ENCODE measurements at regions of chr15 and their contacts with region 1.

Region 1: GRCh38 chr15:62306851-62307504 is 141.9 kb upstream of the C2CD4B start:
- DNase-seq: peak; percentile 16
- H3K4me3 ChIP-seq: no peak overlapping the region
- CTCF ChIP-seq: peak; percentile 40

Region 2: DNA sequence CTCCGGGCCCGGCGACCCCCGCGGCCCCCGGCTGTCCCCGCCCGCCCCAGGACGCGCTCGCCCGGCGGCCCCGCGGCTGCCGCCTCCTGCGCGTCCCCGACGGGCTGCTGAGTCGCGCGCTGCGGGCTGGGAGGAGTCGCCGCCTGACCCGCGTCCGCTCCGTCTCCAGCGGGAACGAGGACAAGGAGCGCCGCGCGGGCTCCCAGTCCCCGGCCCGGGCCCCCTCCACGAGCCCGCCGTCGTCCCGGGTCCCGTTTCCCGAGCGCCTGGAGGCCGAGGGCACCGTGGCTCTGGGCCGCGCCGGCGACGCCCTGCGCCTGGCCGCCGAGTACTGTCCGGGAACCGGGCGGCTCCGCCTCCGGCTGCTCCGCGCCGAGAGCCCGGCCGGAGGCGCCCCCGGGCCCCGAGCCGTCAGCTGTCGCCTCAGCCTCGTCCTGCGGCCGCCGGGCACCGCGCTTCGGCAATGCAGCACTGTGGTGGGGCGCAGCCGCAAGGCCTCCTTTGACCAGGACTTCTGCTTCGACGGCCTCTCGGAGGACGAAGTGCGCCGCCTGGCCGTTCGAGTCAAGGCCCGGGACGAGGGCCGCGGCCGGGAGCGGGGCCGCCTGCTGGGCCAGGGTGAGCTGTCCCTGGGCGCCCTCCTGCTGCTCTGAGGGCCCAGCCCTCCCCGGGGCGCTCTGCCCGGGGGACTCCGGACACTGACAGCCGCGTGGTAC is 238.7 kb before region 1 on chr15:
- CTCF ChIA-PET with region 1: interaction called, 30 read pairs
- POLR2A ChIA-PET with region 1: no interaction called
- DNase-seq: no peak
- H3K4me3 ChIP-seq: peak overlapping the region; percentile 53
- CTCF ChIP-seq: peak; percentile 20

Region 3: GRCh38 chr15:62254137-62254934 is 52.6 kb before region 1 on chr15:
- CTCF ChIA-PET with region 1: interaction called, 12 read pairs
- POLR2A ChIA-PET with region 1: no interaction called
- DNase-seq: no peak
- H3K4me3 ChIP-seq: no peak overlapping the region
- CTCF ChIP-seq: peak; percentile 84

Region 4: GRCh38 chr15:62296756-62297507 is 10.0 kb before region 1 on chr15:
- CTCF ChIA-PET with region 1: interaction called, 12 read pairs
- POLR2A ChIA-PET with region 1: no interaction called
- DNase-seq: no peak
- H3K4me3 ChIP-seq: no peak overlapping the region
- CTCF ChIP-seq: no peak

Region 5: GRCh38 chr15:62742409-62743171 is 435.6 kb after region 1 on chr15:
- CTCF ChIA-PET with region 1: interaction called, 16 read pairs
- POLR2A ChIA-PET with region 1: no interaction called
- DNase-seq: peak; percentile 68
- H3K4me3 ChIP-seq: no peak overlapping the region
- CTCF ChIP-seq: peak; percentile 76

Measured in AG04449 (cell line).